ENCODE measurements at regions of chr6 and their contacts with region 1.

Region 1: GRCh38 chr6:6676910-6677441 is 88.5 kb downstream of the LY86 start:
- DNase-seq: peak; percentile 45
- H3K4me3 ChIP-seq: no peak overlapping the region
- H3K27ac ChIP-seq: no peak overlapping the region
- H3K27me3 ChIP-seq: peaks cover 3% of the 10 kb centered on the region
- CTCF ChIP-seq: peak; percentile 97

Region 2: GRCh38 chr6:6661684-6662083 is 15.3 kb before region 1 on chr6:
- CTCF ChIA-PET with region 1: interaction called, 11 read pairs
- POLR2A ChIA-PET with region 1: no interaction called
- DNase-seq: no peak
- H3K4me3 ChIP-seq: no peak overlapping the region
- H3K27ac ChIP-seq: no peak overlapping the region
- H3K27me3 ChIP-seq: peaks cover 4% of the 10 kb centered on the region
- CTCF ChIP-seq: no peak

Region 3: DNA sequence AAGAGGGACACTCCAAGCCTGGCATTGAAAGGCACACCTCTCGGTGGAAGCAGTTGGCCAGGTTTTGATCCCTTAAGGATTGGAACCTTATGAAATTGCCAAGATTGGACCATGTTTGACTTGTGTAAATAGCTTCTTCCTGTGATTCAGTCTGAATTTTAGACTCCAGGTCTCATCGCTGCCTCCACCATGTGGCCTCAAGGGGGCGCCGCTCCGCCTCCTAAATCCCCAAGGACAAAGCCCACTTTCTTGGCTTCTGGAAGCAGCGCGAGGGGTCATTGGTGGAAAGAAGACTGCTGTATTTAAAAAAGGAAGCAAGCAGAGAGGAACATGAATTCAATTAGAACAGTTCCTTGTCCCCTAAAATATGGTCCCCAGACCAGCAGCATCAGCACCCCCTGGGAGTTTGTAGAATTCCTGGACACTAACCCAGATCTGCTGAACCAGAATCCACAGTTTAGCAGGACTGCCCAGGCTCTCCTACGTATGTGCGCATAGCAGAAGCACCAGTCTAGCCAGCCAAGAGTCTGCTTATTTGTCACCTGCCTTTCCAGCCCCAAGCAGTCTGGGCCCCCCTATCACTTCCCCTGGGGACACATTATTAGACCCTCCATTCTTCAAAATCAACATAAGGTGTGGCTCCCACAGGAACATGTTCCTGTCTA is 20.0 kb after region 1 on chr6:
- CTCF ChIA-PET with region 1: interaction called, 11 read pairs
- POLR2A ChIA-PET with region 1: no interaction called
- DNase-seq: no peak
- H3K4me3 ChIP-seq: no peak overlapping the region
- H3K27ac ChIP-seq: no peak overlapping the region
- H3K27me3 ChIP-seq: peaks cover 11% of the 10 kb centered on the region
- CTCF ChIP-seq: peak; percentile 67

Region 4: GRCh38 chr6:7270320-7271204 is 593.6 kb after region 1 on chr6:
- CTCF ChIA-PET with region 1: interaction called, 11 read pairs
- POLR2A ChIA-PET with region 1: no interaction called
- DNase-seq: no peak
- H3K4me3 ChIP-seq: no peak overlapping the region
- H3K27ac ChIP-seq: no peak overlapping the region
- H3K27me3 ChIP-seq: no peaks in the 10 kb centered on the region
- CTCF ChIP-seq: no peak

Measured in AG04450 (cell line).